AG04449 (cell line): ENCODE measurements at regions of chr12 and their contacts with region 1.

Region 1: DNA sequence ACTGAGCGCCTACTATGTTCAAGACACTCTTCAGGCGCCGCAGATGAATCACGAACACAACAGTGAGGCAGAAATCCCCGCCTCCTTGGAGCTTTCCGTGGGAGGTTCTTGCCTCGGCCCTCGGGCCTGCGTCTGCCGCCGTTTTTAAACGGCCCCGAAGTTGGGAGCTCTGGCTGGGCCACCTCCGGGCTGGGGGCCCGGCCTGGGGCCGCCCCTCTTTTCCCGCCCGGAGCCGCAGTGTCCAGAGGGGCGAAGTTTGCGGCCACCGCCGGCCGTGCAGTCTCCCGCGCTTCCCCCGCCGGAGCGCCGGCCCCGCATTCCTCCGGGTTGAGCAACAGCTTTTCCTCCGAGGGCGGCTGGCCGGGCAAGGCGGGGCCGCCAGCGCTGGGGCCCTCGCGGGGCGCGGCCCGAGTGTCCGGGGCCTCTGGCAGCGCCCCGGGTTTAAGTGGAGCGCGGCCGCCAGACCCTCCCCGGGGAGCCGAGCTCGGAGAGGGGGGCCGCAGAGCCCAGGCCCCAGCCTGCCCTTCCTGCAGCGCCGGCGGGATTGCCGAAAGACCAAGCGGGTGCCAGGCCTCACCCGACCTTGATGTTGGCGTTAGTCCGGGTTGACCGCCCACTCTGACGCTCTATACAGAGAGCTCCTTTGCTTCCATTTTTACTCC is 18.7 kb upstream of the CTDSP2 start:
- DNase-seq: no peak
- H3K4me3 ChIP-seq: peak overlapping the region; percentile 52
- CTCF ChIP-seq: no peak

Region 2: DNA sequence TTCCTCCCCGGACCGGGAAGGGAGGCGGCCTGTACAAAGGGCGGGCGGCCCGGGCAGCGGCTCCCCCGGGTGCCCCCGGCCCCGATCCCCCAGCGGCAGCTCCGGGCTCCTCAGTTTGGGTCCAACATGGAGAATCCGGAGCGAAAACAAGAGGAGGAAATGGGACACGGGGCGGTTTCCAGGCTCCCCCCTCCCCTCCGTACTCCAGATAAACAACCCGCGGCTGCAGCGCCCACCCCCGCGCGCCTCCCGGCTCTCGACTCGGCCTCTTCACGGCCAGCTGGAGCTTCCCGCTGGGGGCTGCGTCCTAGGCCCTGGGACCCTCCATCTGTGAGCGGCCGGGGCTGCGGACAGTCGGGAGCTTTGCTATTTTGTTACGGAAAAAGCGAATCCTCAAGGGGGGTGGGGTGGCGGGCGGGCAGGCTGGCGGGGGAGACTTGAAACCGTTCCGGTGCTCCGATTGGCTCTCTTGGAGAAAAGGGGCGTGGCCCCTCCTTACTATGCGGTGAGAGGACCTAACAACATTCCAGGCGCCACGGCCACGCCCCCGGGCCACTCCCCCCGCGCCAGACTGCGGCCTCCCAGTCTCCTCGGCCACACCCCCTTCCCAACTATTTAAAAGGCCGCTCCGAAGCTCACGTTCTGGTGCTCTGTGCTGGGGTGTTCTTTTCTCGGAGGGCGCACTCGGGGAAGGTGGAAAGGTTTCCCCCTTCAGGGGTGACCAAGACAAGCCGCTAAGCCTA is 18.5 kb before region 1 on chr12 and contains the start of gene CTDSP2:
- CTCF ChIA-PET with region 1: interaction called, 5 read pairs
- POLR2A ChIA-PET with region 1: interaction called, 46 read pairs
- DNase-seq: peak; percentile 85
- H3K4me3 ChIP-seq: peak within 1 kb of the TSS; percentile 99
- CTCF ChIP-seq: no peak

Region 3: GRCh38 chr12:57875753-57876547 is 10.7 kb after region 1 on chr12:
- CTCF ChIA-PET with region 1: interaction called, 14 read pairs
- POLR2A ChIA-PET with region 1: no interaction called
- DNase-seq: no peak
- H3K4me3 ChIP-seq: no peak overlapping the region
- CTCF ChIP-seq: no peak

Region 4: GRCh38 chr12:57888409-57889157 is 23.4 kb after region 1 on chr12:
- CTCF ChIA-PET with region 1: interaction called, 9 read pairs
- POLR2A ChIA-PET with region 1: interaction called, 29 read pairs
- DNase-seq: no peak
- H3K4me3 ChIP-seq: peak overlapping the region; percentile 38
- CTCF ChIP-seq: no peak

Region 5: GRCh38 chr12:57893431-57894353 is 28.5 kb after region 1 on chr12:
- CTCF ChIA-PET with region 1: interaction called, 15 read pairs
- POLR2A ChIA-PET with region 1: interaction called, 29 read pairs
- DNase-seq: peak; percentile 78
- H3K4me3 ChIP-seq: peak overlapping the region; percentile 40
- CTCF ChIP-seq: peak; percentile 14

Region 6: DNA sequence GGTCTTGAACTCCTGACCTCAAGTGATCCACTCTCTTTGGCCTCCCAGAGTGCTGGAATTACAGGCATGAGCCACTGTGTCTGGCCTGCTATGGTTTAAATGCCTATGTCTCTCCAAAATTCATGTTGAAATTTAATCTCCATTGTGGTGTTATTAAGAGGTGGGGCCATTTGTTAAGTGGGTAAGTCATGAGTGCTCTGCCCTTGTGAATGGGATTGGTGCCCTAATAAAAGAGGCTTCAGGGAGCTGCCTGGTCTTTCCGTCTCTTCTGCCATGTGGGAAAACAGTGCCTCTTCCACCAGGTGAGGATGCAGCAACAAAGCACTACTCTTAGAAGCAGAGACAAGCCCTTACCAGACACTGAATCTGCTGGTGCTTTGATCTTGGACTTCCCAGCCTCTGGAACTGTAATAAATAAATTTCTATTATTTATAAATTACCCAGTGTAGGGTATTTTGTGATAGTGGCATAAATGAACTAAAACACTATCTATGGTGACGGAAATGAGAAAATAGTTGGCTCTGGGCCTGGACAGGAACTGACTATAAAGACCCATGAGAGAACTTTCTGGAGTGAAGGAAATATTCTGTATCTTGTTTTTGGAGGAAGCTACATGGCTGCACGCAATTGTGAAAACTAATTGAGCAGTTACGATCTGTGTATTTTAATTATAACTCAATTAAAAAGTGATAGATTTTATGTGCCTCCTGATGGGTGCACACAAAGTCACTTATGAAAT is 64.0 kb after region 1 on chr12:
- CTCF ChIA-PET with region 1: no interaction called
- POLR2A ChIA-PET with region 1: no interaction called
- DNase-seq: no peak
- H3K4me3 ChIP-seq: no peak overlapping the region
- CTCF ChIP-seq: no peak